MCF 10A (cell line): ENCODE measurements at regions of chr1 and their contacts with region 1.

Region 1: DNA sequence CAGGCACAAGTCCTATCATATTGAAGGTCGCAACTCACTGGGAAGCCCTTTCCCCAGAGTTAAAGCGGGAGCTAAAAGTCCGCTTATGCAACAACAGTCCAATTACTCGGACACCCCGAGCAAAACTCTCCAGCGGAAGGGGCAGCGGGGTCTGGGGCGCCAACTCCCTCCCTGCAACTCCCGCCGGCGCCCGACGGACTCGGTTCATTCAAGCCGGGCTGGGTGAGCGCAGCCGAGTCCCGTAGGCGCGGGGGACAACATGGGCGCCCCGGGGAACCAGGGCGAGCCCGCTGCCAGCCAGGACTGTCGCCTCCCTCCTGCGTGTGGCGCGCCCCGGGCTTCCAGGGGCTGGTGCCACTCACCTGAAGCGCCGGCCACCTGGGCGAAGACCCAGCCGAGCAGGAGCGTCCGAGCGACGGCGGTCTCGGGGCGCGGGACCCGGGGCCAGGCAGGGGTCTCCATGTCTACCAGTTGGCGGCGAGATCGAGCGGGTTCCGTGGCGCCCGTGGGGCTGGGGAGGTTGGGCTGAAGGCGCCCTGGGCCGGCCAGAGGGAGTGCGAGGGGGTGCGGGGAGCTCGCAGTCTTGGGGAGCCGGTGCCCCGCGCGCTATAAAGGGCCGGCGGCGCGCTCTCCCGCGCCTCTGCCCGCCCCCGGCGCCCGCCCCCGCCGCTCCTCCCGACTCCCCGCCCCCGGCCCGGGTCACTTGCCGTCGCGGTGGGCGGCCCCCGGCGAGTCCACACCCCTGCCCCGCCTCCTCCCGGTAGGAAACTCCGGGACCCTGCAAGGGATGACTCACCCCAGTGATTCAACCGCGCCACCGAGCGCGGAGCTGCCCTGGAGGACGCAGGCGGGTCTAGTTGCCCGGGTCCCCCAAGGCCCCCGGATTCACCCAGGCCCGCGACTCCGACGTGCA is at the start of gene F3:
- DNase-seq: peak; percentile 91
- H3K4me3 Mint-ChIP-seq: peak within 1 kb of the TSS; percentile 92
- H3K27ac Mint-ChIP-seq: peak within 1 kb of the TSS; percentile 97
- H3K4me1 Mint-ChIP-seq: peaks cover 64% of the 10 kb centered on the region
- H3K27me3 Mint-ChIP-seq: no peaks in the 10 kb centered on the region
- CTCF ChIP-seq: no peak
- total RNA-seq, gene F3: 173 and 296 TPM in 2 replicates

Region 2: GRCh38 chr1:94522304-94522703 is 19.1 kb before region 1 on chr1:
- CTCF ChIA-PET with region 1: interaction called, 15 read pairs
- POLR2A ChIA-PET with region 1: interaction called, 30 read pairs
- intact Hi-C with region 1: no loop called
- DNase-seq: peak; percentile 65
- H3K4me3 Mint-ChIP-seq: no peak overlapping the region
- H3K27ac Mint-ChIP-seq: no peak overlapping the region
- H3K4me1 Mint-ChIP-seq: peaks cover 6% of the 10 kb centered on the region
- H3K27me3 Mint-ChIP-seq: no peaks in the 10 kb centered on the region
- CTCF ChIP-seq: peak; percentile 32

Region 3: GRCh38 chr1:94579876-94580294 is 38.5 kb after region 1 on chr1:
- CTCF ChIA-PET with region 1: interaction called, 3 read pairs
- POLR2A ChIA-PET with region 1: interaction called, 21 read pairs
- intact Hi-C with region 1: loop called (anchors 5 kb)
- DNase-seq: peak; percentile 96
- H3K4me3 Mint-ChIP-seq: no peak overlapping the region
- H3K27ac Mint-ChIP-seq: peak overlapping the region; percentile 46
- H3K4me1 Mint-ChIP-seq: peaks cover 33% of the 10 kb centered on the region
- H3K27me3 Mint-ChIP-seq: no peaks in the 10 kb centered on the region
- CTCF ChIP-seq: no peak

Region 4: DNA sequence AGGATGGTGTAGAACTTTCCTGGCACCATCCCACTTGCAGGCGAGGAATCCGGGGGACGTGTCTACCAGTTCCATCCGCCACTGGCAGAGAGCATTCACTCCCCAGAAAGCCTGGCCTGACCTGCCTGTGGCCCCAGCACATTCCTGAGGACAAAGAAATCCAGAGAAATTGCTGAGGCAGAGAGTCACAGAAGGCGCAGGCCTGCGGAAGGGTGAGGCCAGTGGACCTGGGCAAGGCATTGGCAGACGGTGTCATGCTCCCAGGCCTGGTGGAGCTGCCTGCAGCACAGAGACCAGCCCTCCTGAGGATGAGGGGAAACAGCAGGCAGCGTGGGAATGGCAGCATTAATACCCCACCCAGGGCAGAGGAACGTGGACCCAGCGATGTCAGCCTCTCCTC is 81.3 kb after region 1 on chr1:
- CTCF ChIA-PET with region 1: interaction called, 6 read pairs
- POLR2A ChIA-PET with region 1: interaction called, 30 read pairs
- intact Hi-C with region 1: no loop called
- DNase-seq: peak; percentile 81
- H3K4me3 Mint-ChIP-seq: peak overlapping the region; percentile 23
- H3K27ac Mint-ChIP-seq: peak overlapping the region; percentile 86
- H3K4me1 Mint-ChIP-seq: peaks cover 51% of the 10 kb centered on the region
- H3K27me3 Mint-ChIP-seq: no peaks in the 10 kb centered on the region
- CTCF ChIP-seq: no peak

Region 5: GRCh38 chr1:94713472-94714141 is 172.2 kb after region 1 on chr1:
- CTCF ChIA-PET with region 1: interaction called, 4 read pairs
- POLR2A ChIA-PET with region 1: interaction called, 23 read pairs
- intact Hi-C with region 1: no loop called
- DNase-seq: peak; percentile 98
- H3K4me3 Mint-ChIP-seq: no peak overlapping the region
- H3K27ac Mint-ChIP-seq: peak overlapping the region; percentile 97
- H3K4me1 Mint-ChIP-seq: peaks cover 33% of the 10 kb centered on the region
- H3K27me3 Mint-ChIP-seq: no peaks in the 10 kb centered on the region
- CTCF ChIP-seq: no peak

Region 6: GRCh38 chr1:94783342-94784264 is 242.2 kb after region 1 on chr1:
- CTCF ChIA-PET with region 1: interaction called, 3 read pairs
- POLR2A ChIA-PET with region 1: interaction called, 12 read pairs
- intact Hi-C with region 1: no loop called
- DNase-seq: peak; percentile 87
- H3K4me3 Mint-ChIP-seq: peak overlapping the region; percentile 29
- H3K27ac Mint-ChIP-seq: peak overlapping the region; percentile 95
- H3K4me1 Mint-ChIP-seq: peaks cover 19% of the 10 kb centered on the region
- H3K27me3 Mint-ChIP-seq: no peaks in the 10 kb centered on the region
- CTCF ChIP-seq: no peak